Mammary epithelial cell (primary cell): ENCODE measurements at regions of chr3 and their contacts with region 1.

Region 1: DNA sequence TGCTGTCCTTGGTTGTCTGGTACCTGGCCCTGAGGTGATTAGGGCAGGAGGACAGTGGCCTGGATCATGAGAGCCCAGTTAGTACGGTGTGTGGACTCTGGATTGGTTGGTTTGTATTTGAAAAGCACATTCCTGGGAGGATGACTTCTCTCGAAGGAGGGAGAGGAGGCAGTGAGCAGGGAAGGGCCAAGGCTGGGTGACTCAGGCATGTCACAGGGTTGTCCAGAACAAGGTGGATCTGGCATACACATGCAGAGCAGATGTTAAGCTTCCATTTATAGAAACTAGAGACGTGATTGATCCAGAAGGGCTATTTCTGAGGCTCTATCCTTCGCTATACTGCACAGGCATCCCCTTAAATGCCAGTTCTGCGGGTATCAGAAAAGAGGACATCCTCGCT is 34.4 kb downstream of the FAM240A start:
- DNase-seq: peak; percentile 70
- H3K4me3 ChIP-seq: no peak overlapping the region
- H3K27ac ChIP-seq: no peak overlapping the region
- H3K4me1 ChIP-seq: peaks cover 10% of the 10 kb centered on the region
- H3K27me3 ChIP-seq: no peaks in the 10 kb centered on the region
- CTCF ChIP-seq: no peak

Region 2: DNA sequence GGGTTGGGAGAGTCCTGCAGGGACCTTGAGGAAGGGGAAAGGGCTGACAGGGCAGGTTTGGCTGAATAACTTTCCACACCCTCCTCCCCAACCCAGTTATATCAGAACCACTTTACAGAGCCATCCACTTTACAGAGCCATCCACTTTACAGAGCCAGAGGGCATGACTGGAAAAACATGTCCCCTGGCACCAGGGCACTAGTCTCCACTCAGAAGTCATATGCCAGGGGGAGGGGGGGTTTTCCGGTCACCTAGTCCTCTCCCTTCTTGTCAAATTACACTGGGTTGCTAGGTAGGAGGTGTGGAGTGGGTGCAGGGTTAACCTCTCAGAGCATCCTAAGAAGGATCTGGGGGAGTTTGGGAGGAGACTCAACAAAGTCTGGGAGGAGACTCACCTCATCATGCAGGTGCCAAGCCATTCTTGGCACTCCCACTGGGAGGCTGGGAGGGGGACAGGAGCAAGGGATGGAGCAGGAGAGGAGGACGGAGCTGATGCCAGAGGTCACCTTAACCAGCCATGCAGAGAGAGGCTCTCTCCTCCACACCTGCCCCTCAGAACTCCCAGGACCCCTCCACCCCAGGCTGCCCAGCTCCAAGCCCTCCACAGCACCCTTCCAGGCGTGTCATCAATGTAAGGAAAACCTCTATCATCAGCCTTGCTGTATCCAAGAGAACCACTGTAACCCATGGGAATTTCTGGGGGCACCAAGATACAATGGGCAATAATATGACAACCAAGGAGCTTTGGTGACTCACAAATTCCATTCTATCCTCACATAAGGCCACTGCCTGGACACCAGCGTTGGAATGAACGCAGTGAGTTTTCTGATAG is 82.3 kb before region 1 on chr3:
- CTCF ChIA-PET with region 1: no interaction called
- dilution Hi-C with region 1: loop called (anchors 5 kb)
- in situ Hi-C with region 1: no loop called
- intact Hi-C with region 1: no loop called
- DNase-seq: no peak
- H3K4me3 ChIP-seq: no peak overlapping the region
- H3K27ac ChIP-seq: no peak overlapping the region
- H3K4me1 ChIP-seq: peaks cover 7% of the 10 kb centered on the region
- H3K27me3 ChIP-seq: no peaks in the 10 kb centered on the region
- CTCF ChIP-seq: no peak

Region 3: DNA sequence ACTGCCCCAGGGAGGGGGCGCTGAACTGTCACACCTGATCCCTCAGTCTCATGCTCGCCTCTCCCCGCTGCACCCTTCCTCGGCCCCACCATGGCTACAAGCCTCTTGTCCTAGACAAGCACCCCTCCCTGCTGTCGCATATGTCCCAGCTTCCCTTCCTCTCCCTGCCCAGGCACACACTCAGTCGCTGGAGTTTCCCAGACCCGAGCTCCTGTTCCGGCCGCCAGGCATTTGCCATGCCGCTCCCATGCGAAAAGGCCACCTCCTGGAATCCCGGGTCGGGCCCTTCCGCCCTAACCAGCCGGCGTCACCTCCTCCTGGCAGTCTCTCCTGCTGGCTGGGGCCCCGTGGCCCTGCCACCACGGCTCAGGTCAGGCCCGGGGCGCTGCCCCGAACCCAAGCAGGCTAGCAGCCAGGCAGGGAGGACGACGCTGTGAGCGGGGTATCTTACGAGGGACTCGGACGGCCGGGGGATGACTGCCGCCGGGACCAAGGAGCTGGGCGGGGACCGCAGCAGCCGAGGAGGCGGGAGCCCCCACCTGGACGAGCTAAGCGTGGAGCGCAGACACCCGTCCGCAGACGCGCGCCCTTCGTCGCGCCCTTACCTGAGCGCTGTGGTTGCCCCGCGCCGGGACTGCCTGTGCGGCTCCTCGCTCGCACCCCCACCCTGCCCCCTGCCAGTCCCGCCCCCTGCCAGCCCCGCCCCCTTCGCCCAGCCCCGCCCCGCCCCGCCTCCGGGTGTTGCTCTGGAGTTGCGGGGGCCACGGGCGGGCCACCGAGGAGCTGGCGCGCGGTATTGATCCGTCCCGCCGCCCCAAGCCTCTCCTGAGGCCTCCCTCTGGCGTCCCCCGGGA is 46.6 kb after region 1 on chr3 and contains the start of gene ALS2CL:
- CTCF ChIA-PET with region 1: no interaction called
- dilution Hi-C with region 1: no loop called
- in situ Hi-C with region 1: no loop called
- intact Hi-C with region 1: no loop called
- DNase-seq: peak; percentile 75
- H3K4me3 ChIP-seq: peak within 1 kb of the TSS; percentile 72 to 93 (median 92)
- H3K27ac ChIP-seq: peak within 1 kb of the TSS; percentile 89
- H3K4me1 ChIP-seq: peaks cover 47% of the 10 kb centered on the region
- H3K27me3 ChIP-seq: no peaks in the 10 kb centered on the region
- CTCF ChIP-seq: peak in 1 of 2 donors; percentile 14
- total RNA-seq, gene ALS2CL: 57.5 to 144 TPM

Region 4: GRCh38 chr3:46833346-46834300 is 186.9 kb after region 1 on chr3:
- CTCF ChIA-PET with region 1: no interaction called
- dilution Hi-C with region 1: no loop called
- in situ Hi-C with region 1: no loop called
- intact Hi-C with region 1: no loop called
- DNase-seq: no peak
- H3K4me3 ChIP-seq: no peak overlapping the region
- H3K27ac ChIP-seq: no peak overlapping the region
- H3K4me1 ChIP-seq: no peaks in the 10 kb centered on the region
- H3K27me3 ChIP-seq: no peaks in the 10 kb centered on the region
- CTCF ChIP-seq: no peak